CD14-positive monocyte (primary cell): ENCODE measurements at regions of chr9 and their contacts with region 1.

Region 1: GRCh38 chr9:110623462-110624025 is 44.0 kb upstream of the SVEP1 start:
- DNase-seq: peak; percentile 15 to 63 (median 38)
- H3K4me3 ChIP-seq: no peak overlapping the region
- H3K4me3 Mint-ChIP-seq: no peak overlapping the region
- H3K27ac ChIP-seq: no peak overlapping the region
- H3K27ac Mint-ChIP-seq: no peak overlapping the region
- H3K4me1 ChIP-seq: no peaks in the 10 kb centered on the region
- H3K4me1 Mint-ChIP-seq: no peaks in the 10 kb centered on the region
- H3K27me3 ChIP-seq: no peaks in the 10 kb centered on the region
- H3K27me3 Mint-ChIP-seq: peaks cover 0 to 8% (median 0%) of the 10 kb centered on the region in 3 donors
- CTCF ChIP-seq: peak; percentile 82

Region 2: DNA sequence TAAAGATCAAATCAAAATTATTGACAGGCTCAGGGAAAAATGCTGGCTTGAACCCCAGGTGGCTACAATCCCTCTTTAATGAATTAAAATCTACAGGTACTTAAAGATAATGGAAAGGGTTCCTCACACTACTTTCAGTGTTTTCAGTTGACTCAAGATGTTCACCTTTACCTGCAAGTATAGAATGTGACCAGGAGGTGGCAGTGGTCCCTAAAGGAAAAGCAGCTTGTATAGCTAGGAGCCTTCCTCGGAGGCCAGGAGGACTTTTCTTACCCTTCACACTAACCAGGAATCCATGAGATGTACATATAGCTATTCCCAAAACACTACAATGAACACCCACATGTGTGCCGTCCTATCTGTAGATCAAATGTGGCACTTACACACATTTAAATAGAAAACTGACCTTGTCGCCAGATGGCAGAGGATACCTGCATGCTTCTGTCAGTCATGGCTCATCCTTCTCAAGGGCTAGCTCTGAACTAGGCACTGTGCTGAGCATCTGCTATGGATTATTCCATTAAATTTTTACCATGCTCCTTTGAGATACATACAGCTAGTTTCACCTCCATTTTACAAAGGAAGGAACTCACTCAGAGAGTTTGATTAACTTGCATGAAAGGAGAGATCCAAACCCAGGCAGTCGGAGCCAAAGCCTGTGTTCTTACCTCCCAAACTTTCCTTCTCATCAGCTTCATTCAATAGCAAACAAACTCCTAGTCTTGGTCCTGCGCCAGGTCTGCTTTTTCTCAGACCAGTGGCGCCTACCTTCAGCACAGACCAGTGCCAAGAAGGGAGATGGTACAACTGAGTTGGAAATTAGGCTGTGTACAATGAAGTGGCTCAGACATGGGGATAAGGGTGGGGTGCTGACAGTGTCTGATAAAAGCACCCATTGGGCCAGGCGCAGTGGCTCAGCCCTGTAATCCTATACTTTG is 440.1 kb before region 1 on chr9:
- intact Hi-C with region 1: loop called (anchors 5 to 10 kb)
- DNase-seq: peak; percentile 31 to 57 (median 48)
- H3K4me3 ChIP-seq: no peak overlapping the region
- H3K4me3 Mint-ChIP-seq: no peak overlapping the region
- H3K27ac ChIP-seq: no peak overlapping the region
- H3K27ac Mint-ChIP-seq: no peak overlapping the region
- H3K4me1 ChIP-seq: peaks cover 0 to 7% of the 10 kb centered on the region in 2 donors
- H3K4me1 Mint-ChIP-seq: peaks cover 26% of the 10 kb centered on the region
- H3K27me3 ChIP-seq: no peaks in the 10 kb centered on the region
- H3K27me3 Mint-ChIP-seq: no peaks in the 10 kb centered on the region
- CTCF ChIP-seq: peak; percentile 79

Region 3: DNA sequence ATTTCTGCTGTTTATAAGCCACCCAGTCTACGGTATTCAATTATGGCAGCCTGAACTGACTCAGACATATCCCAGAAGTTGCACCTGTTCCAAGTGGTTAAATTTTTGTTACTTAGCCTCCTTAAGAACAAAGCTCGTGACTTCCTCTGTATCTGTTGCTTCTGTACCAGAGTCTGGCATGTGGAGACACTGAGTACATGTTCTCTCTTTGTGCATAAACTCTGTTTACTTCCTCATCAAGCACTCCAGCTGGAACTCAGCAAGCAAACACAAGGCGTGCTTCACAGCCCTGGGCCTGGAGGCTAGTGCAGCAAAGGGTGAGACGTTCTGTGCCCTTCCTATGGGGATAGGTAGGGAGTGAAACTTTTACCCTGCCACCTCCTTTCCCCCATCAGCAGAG is 434.6 kb before region 1 on chr9:
- intact Hi-C with region 1: loop called (anchors 5 to 10 kb)
- DNase-seq: peak; percentile 28 to 42 (median 36)
- H3K4me3 ChIP-seq: no peak overlapping the region
- H3K4me3 Mint-ChIP-seq: no peak overlapping the region
- H3K27ac ChIP-seq: no peak overlapping the region
- H3K27ac Mint-ChIP-seq: peak overlapping the region in 5 of 7 donors; percentile 29 to 82 (median 67)
- H3K4me1 ChIP-seq: peaks cover 20% of the 10 kb centered on the region in 2 donors
- H3K4me1 Mint-ChIP-seq: peaks cover 36% of the 10 kb centered on the region
- H3K27me3 ChIP-seq: no peaks in the 10 kb centered on the region
- H3K27me3 Mint-ChIP-seq: peaks cover 0 to 4% (median 0%) of the 10 kb centered on the region in 3 donors
- CTCF ChIP-seq: no peak

Region 4: GRCh38 chr9:110427497-110428104 is 195.9 kb before region 1 on chr9:
- intact Hi-C with region 1: loop called in 1 of 2 experiments (anchors 10 kb)
- DNase-seq: peak; percentile 4 to 24 (median 24)
- H3K4me3 ChIP-seq: no peak overlapping the region
- H3K4me3 Mint-ChIP-seq: no peak overlapping the region
- H3K27ac ChIP-seq: no peak overlapping the region
- H3K27ac Mint-ChIP-seq: no peak overlapping the region
- H3K4me1 ChIP-seq: no peaks in the 10 kb centered on the region
- H3K4me1 Mint-ChIP-seq: peaks cover 4% of the 10 kb centered on the region
- H3K27me3 ChIP-seq: no peaks in the 10 kb centered on the region
- H3K27me3 Mint-ChIP-seq: peaks cover 0 to 3% (median 1%) of the 10 kb centered on the region in 3 donors
- CTCF ChIP-seq: peak; percentile 54